Heart right ventricle (tissue), 16 donors: ENCODE measurements at regions of chr22 and their contacts with region 1.

Region 1: DNA sequence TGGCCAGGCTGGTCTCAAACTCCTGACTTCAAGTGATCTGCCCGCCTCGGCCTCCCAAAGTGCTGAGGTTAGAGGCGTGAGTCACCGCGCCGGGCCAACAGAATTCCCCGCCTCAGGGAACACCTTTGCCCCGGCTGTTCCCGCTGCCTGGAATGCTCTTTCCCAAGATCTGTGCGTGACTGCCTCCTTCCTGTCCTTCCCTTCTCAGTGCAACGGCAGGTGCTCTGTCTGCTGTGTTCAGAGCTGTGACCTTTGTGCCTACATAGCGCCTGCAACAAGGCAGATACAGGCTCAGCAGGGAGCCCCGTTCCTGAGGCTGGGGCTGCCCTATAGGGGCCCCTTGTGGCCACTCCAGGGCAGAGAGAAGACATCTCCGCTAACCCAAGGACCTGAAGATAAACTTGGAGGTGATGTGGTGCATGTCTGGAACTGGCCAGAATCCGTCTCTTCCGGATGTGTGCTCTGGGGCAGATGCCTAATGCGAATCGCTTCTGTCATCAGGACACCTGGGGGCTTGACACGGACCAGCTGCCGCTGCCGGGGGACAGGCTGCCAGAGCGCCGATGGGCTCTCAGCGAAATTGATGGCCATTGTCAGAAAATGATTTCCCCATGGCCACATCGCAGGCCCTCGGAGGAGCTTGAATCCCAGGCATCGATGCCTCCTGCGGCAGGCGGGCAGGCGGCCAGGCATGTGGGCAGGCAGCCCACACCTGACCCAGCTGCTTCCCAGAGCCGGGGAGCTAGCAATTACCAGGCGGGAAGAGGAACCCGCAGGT is 43.5 kb upstream of the TCF20 start:
- DNase-seq: peak in 1 of 2 donors; percentile 53
- ATAC-seq: peak in 6 of 8 donors; percentile 39 to 61 (median 56)
- H3K4me3 ChIP-seq: no peak overlapping the region
- H3K27ac ChIP-seq: no peak overlapping the region
- H3K4me1 ChIP-seq: peaks cover 0 to 15% (median 6%) of the 10 kb centered on the region in 9 donors
- H3K27me3 ChIP-seq: peaks cover 0 to 38% (median 24%) of the 10 kb centered on the region in 7 donors
- CTCF ChIP-seq: peak in 6 of 9 donors; percentile 12 to 46 (median 42)

Region 2: DNA sequence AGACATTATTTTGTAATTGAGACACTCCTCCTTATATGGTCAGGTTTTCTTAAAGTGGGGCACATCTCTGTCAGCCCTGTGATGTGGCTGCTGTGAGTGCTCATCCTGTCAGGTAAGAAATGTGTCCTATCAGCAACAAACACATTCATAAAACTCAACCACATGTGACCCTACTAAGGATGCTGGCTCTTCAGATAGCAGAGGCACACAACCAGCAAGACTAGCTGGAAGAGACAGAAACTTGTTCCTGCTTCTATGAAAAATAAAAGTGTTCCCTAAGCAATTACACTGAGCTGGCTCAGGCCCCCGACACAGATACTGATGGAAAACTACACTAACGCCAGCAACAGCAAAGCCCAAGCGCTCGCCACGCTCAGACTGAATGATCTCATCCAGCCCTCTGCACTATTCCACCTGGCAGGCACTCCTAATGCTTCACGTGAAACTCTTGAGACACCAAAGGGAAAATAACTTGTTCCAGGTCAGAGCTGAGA is 133.6 kb before region 1 on chr22:
- intact Hi-C with region 1: loop called in 2 of 10 experiments (anchors 10 kb)
- DNase-seq: peak in 1 of 2 donors; percentile 12
- ATAC-seq: peak in 7 of 8 donors; percentile 33 to 78 (median 56)
- H3K4me3 ChIP-seq: no peak overlapping the region
- H3K27ac ChIP-seq: no peak overlapping the region
- H3K4me1 ChIP-seq: peaks cover 0 to 16% (median 11%) of the 10 kb centered on the region in 9 donors
- H3K27me3 ChIP-seq: no peaks in the 10 kb centered on the region
- CTCF ChIP-seq: no peak

Region 3: DNA sequence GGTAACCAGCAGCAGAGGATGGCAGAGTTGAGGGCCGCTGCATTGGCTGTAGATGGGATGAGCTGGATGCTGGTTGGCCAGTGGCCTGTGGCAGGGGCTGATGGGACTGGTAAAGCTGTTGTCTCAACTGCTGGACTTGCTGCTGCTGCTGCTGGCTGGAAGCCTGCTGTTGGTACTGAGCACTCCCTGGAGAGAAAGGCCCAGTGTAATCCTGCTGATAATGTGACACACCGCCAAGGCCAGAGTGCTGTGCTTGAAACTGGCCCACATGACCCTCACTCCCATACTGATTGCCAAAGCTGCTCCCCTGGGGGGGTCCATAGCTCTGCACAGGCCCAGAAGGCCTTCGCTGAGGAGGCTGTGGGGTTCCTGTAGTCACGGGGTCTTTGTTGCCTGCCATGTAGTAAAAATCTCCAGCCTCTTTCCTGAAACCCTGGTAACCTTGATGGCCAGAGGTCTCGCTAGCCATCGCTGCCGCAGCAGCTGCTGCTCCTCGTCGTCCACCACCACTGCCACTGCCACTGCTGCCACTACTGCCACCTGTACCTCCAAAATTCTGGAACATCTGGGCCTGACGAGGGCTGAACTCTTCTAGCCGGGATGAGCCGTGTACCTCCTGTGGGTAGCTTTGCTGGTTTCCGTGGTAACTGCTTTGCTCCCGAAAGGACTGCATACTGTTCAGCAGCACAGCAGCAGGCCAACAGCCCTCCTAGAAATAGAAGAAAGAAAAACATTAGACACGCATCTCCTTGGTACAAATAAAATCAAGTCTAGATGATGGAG is 99.2 kb before region 1 on chr22:
- intact Hi-C with region 1: no loop called
- DNase-seq: peak; percentile 44 to 59
- ATAC-seq: peak; percentile 54 to 95 (median 90)
- H3K4me3 ChIP-seq: no peak overlapping the region
- H3K27ac ChIP-seq: peak overlapping the region in 4 of 10 donors; percentile 5 to 52 (median 34)
- H3K4me1 ChIP-seq: peaks cover 2 to 38% (median 5%) of the 10 kb centered on the region in 9 donors
- H3K27me3 ChIP-seq: no peaks in the 10 kb centered on the region
- CTCF ChIP-seq: no peak

Region 4: GRCh38 chr22:42388130-42388797 is 74.3 kb after region 1 on chr22:
- intact Hi-C with region 1: loop called in 1 of 10 experiments (anchors 10 kb)
- DNase-seq: no peak
- ATAC-seq: no peak
- H3K4me3 ChIP-seq: no peak overlapping the region
- H3K27ac ChIP-seq: no peak overlapping the region
- H3K4me1 ChIP-seq: no peaks in the 10 kb centered on the region
- H3K27me3 ChIP-seq: peaks cover 0 to 4% (median 0%) of the 10 kb centered on the region in 7 donors
- CTCF ChIP-seq: no peak